ENCODE measurements at regions of chr2 and their contacts with region 1.

Region 1: DNA sequence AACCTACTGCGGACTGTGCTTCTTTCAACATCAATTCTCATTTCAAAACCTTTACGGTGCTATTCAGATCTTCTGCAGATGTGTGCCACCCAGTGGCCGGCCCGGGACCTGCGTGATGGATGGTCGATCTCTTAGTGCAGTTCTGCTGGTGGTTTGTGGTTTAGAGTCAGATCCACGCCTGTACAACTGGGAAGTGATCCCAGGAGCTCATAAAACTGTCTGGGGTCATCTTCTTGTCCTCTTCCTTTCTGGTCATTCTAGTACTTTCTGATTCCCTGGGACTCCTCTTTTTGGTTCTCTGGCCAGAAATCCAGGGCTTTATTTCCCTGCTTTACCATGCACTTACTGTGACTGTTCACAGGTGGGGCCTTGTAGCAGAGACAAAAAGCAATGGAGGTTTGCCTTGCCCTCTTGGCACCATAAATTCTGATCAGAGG is 15.8 kb upstream of the SELENOI start:
- DNase-seq: peak; percentile 87 to 90 (median 87)
- ATAC-seq: peak; percentile 99 to 100 (median 99)
- H3K4me3 ChIP-seq: no peak overlapping the region
- H3K27ac ChIP-seq: no peak overlapping the region
- H3K4me1 ChIP-seq: no peaks in the 10 kb centered on the region
- H3K27me3 ChIP-seq: no peaks in the 10 kb centered on the region
- CTCF ChIP-seq: peak; percentile 84 to 92 (median 88)
- POLR2A ChIP-seq: no peak

Region 2: GRCh38 chr2:26235085-26235484 is 95.0 kb before region 1 on chr2:
- intact Hi-C with region 1: loop called in 1 of 2 experiments (anchors 10 kb)
- DNase-seq: no peak
- ATAC-seq: peak; percentile 39 to 63 (median 58)
- H3K4me3 ChIP-seq: no peak overlapping the region
- H3K27ac ChIP-seq: no peak overlapping the region
- H3K4me1 ChIP-seq: peaks cover 0 to 27% (median 11%) of the 10 kb centered on the region in 4 donors
- H3K27me3 ChIP-seq: no peaks in the 10 kb centered on the region
- CTCF ChIP-seq: peak; percentile 21 to 55 (median 44)
- POLR2A ChIP-seq: no peak

Region 3: DNA sequence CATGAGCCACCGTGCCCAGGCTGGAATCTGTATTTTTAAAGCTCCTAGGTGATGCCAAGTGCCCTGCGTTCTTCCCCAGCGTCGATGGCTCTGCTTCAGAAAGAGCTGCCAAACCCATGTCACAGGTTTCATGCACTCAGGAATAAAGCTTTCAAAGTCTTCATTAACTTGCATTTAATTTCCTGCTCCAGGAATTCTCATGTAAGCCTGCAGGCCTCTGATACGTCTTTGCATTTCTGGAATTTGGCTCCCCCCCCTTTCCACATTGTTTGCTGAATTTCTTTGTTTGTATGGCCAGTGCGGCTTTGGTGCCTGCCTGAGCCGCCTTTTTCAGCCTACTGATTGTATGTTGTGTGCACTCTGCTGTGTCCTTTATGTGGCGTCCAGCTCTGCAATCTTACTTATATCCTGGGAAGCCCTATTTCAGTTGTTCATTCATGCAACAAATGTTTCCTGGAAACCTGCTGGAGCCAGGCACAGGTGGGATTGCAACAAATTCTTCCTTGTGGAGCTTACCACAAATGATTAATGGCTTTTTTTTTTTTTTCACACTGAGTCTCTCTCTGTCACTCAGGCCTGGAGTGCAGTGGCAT is 165.7 kb after region 1 on chr2:
- intact Hi-C with region 1: no loop called
- DNase-seq: peak in 1 of 3 donors; percentile 7
- ATAC-seq: no peak
- H3K4me3 ChIP-seq: no peak overlapping the region
- H3K27ac ChIP-seq: no peak overlapping the region
- H3K4me1 ChIP-seq: peaks cover 0 to 12% (median 5%) of the 10 kb centered on the region in 4 donors
- H3K27me3 ChIP-seq: no peaks in the 10 kb centered on the region
- CTCF ChIP-seq: no peak
- POLR2A ChIP-seq: no peak

Region 4: DNA sequence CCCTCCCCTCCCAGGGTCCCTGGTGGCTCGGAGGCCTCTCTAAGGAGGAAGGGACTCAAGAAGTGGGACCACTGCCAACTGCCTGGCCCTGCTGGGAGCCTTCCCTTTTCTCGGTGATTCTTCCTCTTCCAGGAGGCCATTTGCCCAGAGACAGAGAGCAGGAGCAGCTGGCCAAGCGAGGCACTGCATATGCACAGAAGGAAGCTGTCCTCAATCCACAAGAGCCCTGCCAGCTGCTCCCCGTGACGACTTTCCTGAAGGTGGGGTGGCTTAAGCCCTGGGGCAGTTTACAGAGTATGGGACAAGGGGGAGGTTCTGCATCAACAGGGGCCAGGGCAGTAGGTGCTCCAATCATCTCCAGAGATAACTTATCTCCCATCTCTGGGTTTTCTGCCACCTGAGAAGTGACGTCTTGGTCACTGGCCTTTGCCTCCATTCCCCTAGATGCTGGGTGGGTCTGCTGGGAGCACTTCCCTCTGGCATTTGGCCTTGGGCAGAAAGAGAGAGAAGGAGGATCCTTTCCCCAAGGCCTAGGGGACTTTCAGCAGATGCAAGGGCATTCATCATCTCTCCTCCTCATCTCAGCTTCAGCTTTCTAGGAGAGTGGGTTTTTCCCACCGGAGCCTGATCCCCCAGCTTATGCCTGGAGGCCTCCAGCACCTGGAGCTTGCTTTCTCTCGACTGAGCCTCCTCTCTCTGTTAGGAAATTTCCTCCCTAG is 282.6 kb after region 1 on chr2:
- intact Hi-C with region 1: no loop called
- DNase-seq: peak in 1 of 3 donors; percentile 59
- ATAC-seq: peak; percentile 35 to 66 (median 44)
- H3K4me3 ChIP-seq: no peak overlapping the region
- H3K27ac ChIP-seq: no peak overlapping the region
- H3K4me1 ChIP-seq: peaks cover 0 to 6% (median 0%) of the 10 kb centered on the region in 4 donors
- H3K27me3 ChIP-seq: no peaks in the 10 kb centered on the region
- CTCF ChIP-seq: no peak
- POLR2A ChIP-seq: no peak

Region 5: DNA sequence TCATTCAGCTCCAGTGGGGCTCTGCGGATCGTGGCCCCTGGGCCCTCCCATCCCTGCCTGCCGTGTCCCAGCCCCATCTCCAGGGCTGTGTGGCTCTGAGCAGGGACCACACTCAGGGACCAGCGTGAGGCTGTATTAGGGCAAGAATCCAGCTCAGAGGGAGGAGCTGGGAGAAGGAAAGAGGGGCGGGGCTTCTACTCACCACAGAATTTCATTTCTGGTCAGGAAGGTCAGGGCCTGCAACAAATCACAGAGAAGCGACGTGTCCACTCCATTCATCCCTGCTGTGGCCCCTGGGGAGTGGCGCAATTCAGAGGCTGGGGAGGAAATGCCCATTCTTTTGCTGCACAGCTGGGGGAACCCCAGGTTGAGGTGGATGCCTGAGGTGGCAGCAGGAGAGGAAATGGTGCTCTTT is 310.2 kb after region 1 on chr2:
- intact Hi-C with region 1: no loop called
- DNase-seq: no peak
- ATAC-seq: peak; percentile 26 to 54 (median 42)
- H3K4me3 ChIP-seq: no peak overlapping the region
- H3K27ac ChIP-seq: no peak overlapping the region
- H3K4me1 ChIP-seq: no peaks in the 10 kb centered on the region
- H3K27me3 ChIP-seq: no peaks in the 10 kb centered on the region
- CTCF ChIP-seq: no peak
- POLR2A ChIP-seq: no peak

Measured in right lobe of liver (tissue), 6 donors.